ENCODE measurements at regions of chr7 and their contacts with region 1.

Region 1: DNA sequence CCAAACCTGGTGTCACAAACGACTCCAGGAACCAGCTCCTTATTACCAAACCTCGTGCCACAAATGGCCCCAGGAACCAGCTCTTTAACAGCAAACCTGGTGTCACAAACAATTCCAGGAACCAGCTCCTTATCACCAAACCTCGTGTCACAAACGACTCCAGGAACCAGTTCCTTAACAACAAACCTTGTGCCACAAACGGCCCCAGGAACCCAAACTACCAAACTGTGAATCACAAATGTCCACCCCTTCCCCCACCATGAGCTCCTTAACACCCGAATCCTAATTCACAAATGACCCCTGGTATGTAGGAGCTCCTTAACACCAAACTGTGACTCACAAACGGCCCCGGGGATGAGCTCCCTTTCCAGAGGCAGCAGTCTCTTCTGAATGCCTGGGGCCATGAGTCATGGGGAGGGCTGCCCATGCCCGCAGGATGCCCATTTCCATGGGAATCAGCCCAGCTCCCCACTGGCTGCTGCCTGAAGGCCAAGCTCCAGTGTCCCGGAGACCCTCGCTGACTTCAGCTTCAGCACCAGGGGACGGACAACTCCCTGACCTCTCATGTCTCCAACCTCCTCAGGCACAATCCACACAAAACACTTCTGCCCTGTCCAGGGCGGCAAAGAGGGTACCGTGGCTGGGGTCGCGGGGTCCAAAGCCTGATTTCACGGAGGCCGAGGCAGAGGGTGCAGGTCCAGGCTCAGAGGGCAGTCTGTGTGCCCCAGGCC is 213.1 kb downstream of the ELFN1 start:
- DNase-seq: peak; percentile 88
- ATAC-seq: peak; percentile 86
- H3K4me3 ChIP-seq: no peak overlapping the region
- H3K27ac ChIP-seq: peak overlapping the region; percentile 72
- H3K4me1 ChIP-seq: peaks cover 19% of the 10 kb centered on the region
- H3K27me3 ChIP-seq: no peaks in the 10 kb centered on the region
- CTCF ChIP-seq: no peak

Region 2: DNA sequence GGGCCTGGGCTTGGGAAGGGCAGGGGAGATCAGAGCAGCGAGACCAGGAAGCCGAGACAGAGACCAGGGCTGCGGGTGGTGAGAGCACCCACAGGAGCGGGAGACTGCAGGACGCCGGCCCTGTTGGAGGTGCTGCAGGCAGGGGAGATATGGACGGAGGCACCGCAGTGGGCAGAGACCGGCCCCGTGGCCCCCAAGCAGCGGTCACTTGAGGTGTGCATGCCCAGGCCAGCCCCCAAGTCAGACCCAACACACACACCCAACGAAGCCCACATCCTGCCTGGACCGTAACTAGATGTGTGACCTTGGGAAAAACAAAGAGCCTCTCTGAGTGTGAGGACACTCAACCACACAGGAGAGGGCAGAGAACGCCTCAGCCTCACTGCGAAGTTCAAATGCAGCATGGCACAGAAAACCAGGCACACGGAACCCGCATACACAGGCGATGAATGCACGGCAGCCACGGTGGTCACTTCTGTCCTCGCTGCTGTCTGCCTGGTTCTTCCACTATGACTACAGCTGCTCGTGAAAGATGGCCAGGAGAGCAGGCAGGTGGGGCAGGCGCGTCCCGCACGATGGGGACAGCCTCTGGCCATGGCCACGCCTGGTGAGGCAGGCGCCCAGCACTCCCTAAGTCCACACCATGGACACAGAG is 134.8 kb after region 1 on chr7:
- CTCF ChIA-PET with region 1: no interaction called
- POLR2A ChIA-PET with region 1: interaction called, 12 read pairs
- intact Hi-C with region 1: no loop called
- DNase-seq: no peak
- ATAC-seq: no peak
- H3K4me3 ChIP-seq: no peak overlapping the region
- H3K27ac ChIP-seq: no peak overlapping the region
- H3K4me1 ChIP-seq: 0 out of 2 replicates have a peak, but pooled peaks cover 4% of the 10 kb centered on the region
- H3K27me3 ChIP-seq: no peaks in the 10 kb centered on the region
- CTCF ChIP-seq: no peak

Region 3: GRCh38 chr7:3289996-3290395 is 1406.8 kb after region 1 on chr7:
- CTCF ChIA-PET with region 1: no interaction called
- POLR2A ChIA-PET with region 1: no interaction called
- intact Hi-C with region 1: no loop called
- DNase-seq: no peak
- ATAC-seq: no peak
- H3K4me3 ChIP-seq: no peak overlapping the region
- H3K27ac ChIP-seq: no peak overlapping the region
- H3K4me1 ChIP-seq: no peaks in the 10 kb centered on the region
- H3K27me3 ChIP-seq: no peaks in the 10 kb centered on the region
- CTCF ChIP-seq: no peak